Activated B cell treated with CpG ODN at 0.5 μM for 24 hours (primary cell): ENCODE measurements at regions of chr7 and their contacts with region 1.

Region 1: GRCh38 chr7:137985253-137985896 is 16.5 kb downstream of the CREB3L2 start:
- DNase-seq: no peak
- ATAC-seq: peak; percentile 75
- H3K4me3 Mint-ChIP-seq: peak overlapping the region; percentile 47
- H3K27ac Mint-ChIP-seq: no peak overlapping the region
- H3K4me1 Mint-ChIP-seq: peaks cover 27% of the 10 kb centered on the region
- H3K27me3 Mint-ChIP-seq: no peaks in the 10 kb centered on the region
- CTCF ChIP-seq: no peak

Region 2: DNA sequence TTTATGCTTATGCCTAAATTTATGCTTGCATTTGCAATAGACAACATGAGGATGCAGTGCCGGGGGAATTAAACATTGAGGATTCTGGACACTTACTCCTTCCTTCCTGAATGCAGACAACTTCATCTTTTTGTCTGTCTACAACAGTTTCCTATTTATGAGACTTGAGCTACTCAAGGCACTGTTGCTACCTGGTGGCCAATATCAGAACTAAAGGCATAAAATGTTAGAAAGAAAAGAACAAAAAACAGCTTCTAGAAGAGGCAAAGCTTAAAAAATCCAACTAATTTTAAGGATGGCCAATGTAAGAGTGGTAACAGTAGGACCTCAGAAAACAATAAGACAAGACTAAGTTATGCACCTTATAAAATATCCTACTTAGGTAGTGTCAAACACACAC is 497.3 kb before region 1 on chr7:
- CTCF ChIA-PET with region 1: no interaction called
- POLR2A ChIA-PET with region 1: no interaction called
- intact Hi-C with region 1: no loop called
- DNase-seq: no peak
- ATAC-seq: no peak
- H3K4me3 Mint-ChIP-seq: no peak overlapping the region
- H3K27ac Mint-ChIP-seq: no peak overlapping the region
- H3K4me1 Mint-ChIP-seq: no peaks in the 10 kb centered on the region
- H3K27me3 Mint-ChIP-seq: no peaks in the 10 kb centered on the region
- CTCF ChIP-seq: no peak

Region 3: DNA sequence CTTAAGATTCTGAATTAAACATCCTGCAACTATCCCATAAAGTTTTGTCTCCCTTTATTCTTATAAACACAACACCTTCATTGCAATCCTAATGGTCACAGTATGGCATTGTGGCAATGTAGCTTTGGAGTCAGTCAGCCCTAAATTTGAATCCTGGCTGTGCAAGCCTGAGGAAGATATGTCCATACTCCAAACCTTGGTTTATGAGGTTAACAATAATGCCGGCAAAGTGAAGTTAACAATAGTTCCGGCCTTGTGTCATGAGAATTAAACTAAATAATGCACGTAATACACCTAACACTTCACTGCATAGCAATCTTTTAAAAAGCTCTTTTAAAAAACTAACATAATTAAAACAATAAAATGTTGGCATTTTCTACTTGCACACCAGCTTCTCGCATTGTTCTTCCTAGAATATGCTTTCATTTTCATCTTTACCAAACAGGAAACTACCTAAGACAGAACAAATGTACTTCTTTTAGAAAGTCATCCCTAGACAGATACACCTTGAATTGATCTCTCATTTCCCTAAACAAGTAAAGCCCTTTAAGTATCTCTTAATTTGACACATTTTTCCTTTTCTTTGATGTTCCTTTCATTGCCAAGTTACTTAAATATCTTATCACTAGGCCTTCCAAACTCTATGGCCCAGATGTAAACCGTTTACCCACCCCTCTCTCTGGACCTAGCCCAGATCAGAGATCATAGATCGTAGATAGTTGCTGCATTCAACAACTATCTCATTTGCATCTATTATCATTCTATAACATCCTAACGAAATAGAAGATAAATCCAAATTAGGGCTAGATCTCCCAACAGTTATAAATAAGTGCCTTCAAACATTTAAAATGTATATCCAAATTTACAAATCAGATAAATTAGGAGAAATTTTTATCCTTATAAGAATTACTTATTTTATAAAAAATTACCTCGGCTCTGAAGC is 50.2 kb before region 1 on chr7:
- CTCF ChIA-PET with region 1: no interaction called
- POLR2A ChIA-PET with region 1: no interaction called
- intact Hi-C with region 1: loop called (anchors 5 kb)
- DNase-seq: no peak
- ATAC-seq: peak; percentile 73
- H3K4me3 Mint-ChIP-seq: peak overlapping the region; percentile 78
- H3K27ac Mint-ChIP-seq: peak overlapping the region; percentile 81
- H3K4me1 Mint-ChIP-seq: peaks cover 40% of the 10 kb centered on the region
- H3K27me3 Mint-ChIP-seq: no peaks in the 10 kb centered on the region
- CTCF ChIP-seq: no peak

Region 4: DNA sequence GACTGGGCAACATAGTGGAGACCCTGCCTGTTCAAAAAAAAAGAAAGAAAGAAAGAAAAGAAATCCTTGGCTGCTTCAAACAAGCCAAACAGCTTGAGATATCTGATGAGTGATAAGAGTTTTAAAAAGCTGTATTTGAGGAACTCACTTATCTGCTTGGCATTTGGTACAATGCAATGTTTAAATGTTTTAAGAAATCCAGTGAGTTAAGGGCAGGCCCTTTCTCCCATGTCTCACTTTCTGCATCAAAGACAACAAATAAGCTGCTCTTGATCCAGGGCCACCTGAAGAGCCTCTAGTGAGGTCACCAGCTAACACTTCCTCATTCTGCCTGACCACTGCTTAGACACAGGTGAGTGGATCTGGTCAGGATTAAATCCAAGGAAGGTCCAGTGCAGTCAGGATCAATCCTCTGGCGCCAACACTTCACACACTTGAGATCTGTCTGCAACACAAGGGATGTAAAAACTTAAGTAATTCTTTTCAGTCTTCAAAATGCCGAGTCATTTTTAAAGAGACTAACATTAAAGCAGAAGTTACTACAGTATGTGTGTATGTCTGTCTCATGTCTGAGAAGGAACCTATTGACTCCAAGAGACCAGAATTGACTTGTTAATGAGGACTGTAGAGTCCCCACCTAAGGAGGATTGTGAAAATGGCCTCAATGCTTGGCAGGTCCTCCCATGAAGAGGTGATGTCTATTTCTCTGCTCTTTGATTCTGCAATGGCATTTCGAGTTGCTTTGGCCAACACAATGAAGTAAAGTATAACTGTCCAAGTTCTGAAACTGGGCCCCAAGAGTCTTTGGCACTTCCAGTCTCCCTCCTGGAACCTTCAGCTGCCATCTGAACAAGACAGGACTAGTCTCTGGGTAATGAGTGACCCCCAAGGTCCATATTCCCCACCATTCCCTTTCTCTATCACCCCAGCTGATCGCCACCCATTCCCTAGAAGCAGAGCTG is 26.6 kb before region 1 on chr7:
- CTCF ChIA-PET with region 1: no interaction called
- POLR2A ChIA-PET with region 1: no interaction called
- intact Hi-C with region 1: loop called (anchors 2 kb)
- DNase-seq: no peak
- ATAC-seq: peak; percentile 34
- H3K4me3 Mint-ChIP-seq: no peak overlapping the region
- H3K27ac Mint-ChIP-seq: peak overlapping the region; percentile 2
- H3K4me1 Mint-ChIP-seq: peaks cover 30% of the 10 kb centered on the region
- H3K27me3 Mint-ChIP-seq: no peaks in the 10 kb centered on the region
- CTCF ChIP-seq: no peak